PC-9 (cell line): ENCODE measurements at regions of chr17 and their contacts with region 1.

Region 1: GRCh38 chr17:60720763-60721531 is 43.3 kb downstream of the BCAS3 start:
- DNase-seq: peak; percentile 22 to 46
- H3K4me3 ChIP-seq: no peak overlapping the region
- H3K27ac ChIP-seq: no peak overlapping the region
- H3K4me1 ChIP-seq: no peaks in the 10 kb centered on the region
- H3K27me3 ChIP-seq: no peaks in the 10 kb centered on the region
- CTCF ChIP-seq: peak; percentile 96

Region 2: GRCh38 chr17:60959696-60960095 is 238.7 kb after region 1 on chr17:
- CTCF ChIA-PET with region 1: no interaction called
- POLR2A ChIA-PET with region 1: no interaction called
- intact Hi-C with region 1: loop called (anchors 10 kb)
- DNase-seq: no peak
- H3K4me3 ChIP-seq: no peak overlapping the region
- H3K27ac ChIP-seq: no peak overlapping the region
- H3K4me1 ChIP-seq: no peaks in the 10 kb centered on the region
- H3K27me3 ChIP-seq: no peaks in the 10 kb centered on the region
- CTCF ChIP-seq: no peak

Region 3: GRCh38 chr17:61002316-61002736 is 281.4 kb after region 1 on chr17:
- CTCF ChIA-PET with region 1: no interaction called
- POLR2A ChIA-PET with region 1: no interaction called
- intact Hi-C with region 1: loop called (anchors 10 kb)
- DNase-seq: no peak
- H3K4me3 ChIP-seq: no peak overlapping the region
- H3K27ac ChIP-seq: no peak overlapping the region
- H3K4me1 ChIP-seq: no peaks in the 10 kb centered on the region
- H3K27me3 ChIP-seq: no peaks in the 10 kb centered on the region
- CTCF ChIP-seq: peak; percentile 75

Region 4: GRCh38 chr17:61389670-61390478 is 668.9 kb after region 1 on chr17:
- CTCF ChIA-PET with region 1: no interaction called
- POLR2A ChIA-PET with region 1: no interaction called
- intact Hi-C with region 1: loop called (anchors 5 kb)
- DNase-seq: peak in 1 of 2 experiments; percentile 51
- H3K4me3 ChIP-seq: no peak overlapping the region
- H3K27ac ChIP-seq: no peak overlapping the region
- H3K4me1 ChIP-seq: 0 out of 2 replicates have a peak, but pooled peaks cover 6% of the 10 kb centered on the region
- H3K27me3 ChIP-seq: no peaks in the 10 kb centered on the region
- CTCF ChIP-seq: peak; percentile 88

Region 5: DNA sequence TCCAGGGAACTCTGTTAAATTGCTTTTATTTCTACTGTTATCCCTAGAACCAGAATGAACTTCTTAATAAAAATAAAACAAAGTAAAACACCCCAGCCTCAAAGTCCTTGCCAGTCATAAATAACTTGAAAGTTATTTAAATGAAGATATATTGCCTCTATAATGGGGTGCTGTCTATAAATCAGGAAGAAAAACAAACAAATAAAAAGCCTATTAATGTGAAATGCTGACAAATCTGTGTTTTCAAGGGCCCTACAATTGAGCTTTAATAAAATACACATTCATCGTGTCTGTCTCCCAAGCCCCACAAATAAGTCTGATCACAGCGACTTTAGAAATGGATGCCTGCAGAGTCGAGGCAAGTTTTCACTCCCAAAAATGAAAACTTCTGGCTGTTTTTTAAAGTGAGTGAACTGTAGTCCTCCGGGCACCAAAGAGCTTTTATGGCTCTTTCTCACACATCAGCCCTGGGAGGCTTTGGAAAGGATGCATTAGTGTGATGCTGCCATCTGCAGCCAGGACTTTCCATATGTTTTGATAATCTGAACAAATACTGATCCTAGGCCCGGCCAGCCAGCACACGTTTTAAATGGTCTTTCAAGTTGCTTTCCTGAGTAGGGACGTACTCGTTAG is 853.7 kb after region 1 on chr17:
- CTCF ChIA-PET with region 1: interaction called, 3 read pairs
- POLR2A ChIA-PET with region 1: no interaction called
- intact Hi-C with region 1: loop called (anchors 10 kb)
- DNase-seq: peak; percentile 43 to 50
- H3K4me3 ChIP-seq: no peak overlapping the region
- H3K27ac ChIP-seq: no peak overlapping the region
- H3K4me1 ChIP-seq: peaks cover 16% of the 10 kb centered on the region
- H3K27me3 ChIP-seq: no peaks in the 10 kb centered on the region
- CTCF ChIP-seq: peak; percentile 65